Heart left ventricle (tissue), 16 donors: ENCODE measurements at regions of chr16 and their contacts with region 1.

Region 1: DNA sequence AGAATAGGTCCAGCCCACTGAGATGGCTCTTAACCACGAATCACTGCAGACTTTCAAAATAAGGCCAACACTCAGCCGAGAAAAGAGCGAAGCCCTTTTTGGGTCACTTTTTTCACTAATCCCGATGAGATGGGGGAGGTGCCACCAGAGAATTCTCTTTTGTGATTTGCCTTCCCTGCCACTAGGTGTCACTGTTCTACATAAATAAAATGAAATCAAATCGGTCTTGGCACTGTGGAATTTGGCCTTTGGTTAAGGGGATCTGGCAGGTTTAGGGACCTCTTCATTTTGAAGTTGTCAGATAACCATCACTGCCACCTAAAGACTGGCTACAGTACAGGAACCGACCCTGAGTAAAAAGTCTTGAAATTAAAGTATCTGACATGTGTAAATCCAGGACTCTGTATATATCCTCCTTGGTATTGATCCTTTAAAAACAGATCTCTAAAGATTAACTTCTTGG is 147.0 kb downstream of the HS3ST4 start:
- DNase-seq: peak in 1 of 5 donors; percentile 7
- ATAC-seq: peak in 2 of 4 donors; percentile 31 to 34
- H3K4me3 ChIP-seq: no peak overlapping the region
- H3K27ac ChIP-seq: no peak overlapping the region
- H3K4me1 ChIP-seq: peaks cover 0 to 4% (median 0%) of the 10 kb centered on the region in 12 donors
- H3K27me3 ChIP-seq: peaks cover 0 to 23% (median 0%) of the 10 kb centered on the region in 9 donors
- CTCF ChIP-seq: peak; percentile 65 to 82 (median 74)
- POLR2A ChIP-seq: no peak

Region 2: DNA sequence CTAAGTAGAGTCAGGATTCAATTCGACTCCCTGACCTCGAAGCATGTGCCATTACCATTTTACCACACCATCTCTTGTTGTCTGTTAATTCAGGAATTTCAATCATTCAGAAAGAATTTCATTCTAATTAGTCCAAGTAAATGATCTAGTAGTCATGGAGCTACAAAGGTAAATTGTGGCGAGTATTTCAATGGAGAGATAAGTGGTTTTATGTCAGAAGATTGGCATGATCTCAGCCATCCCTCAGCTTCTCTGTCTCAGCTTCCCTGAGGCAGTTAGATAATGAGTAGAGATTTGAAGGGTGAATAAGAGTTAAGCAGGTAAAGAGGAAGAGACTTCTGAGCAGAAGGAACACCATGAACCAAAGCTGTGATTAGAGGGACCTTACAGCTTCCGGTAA is 53.4 kb before region 1 on chr16:
- intact Hi-C with region 1: loop called in 1 of 10 experiments (anchors 10 kb)
- DNase-seq: no peak
- ATAC-seq: no peak
- H3K4me3 ChIP-seq: no peak overlapping the region
- H3K27ac ChIP-seq: no peak overlapping the region
- H3K4me1 ChIP-seq: no peaks in the 10 kb centered on the region
- H3K27me3 ChIP-seq: no peaks in the 10 kb centered on the region
- CTCF ChIP-seq: no peak
- POLR2A ChIP-seq: no peak

Region 3: GRCh38 chr16:26026709-26027450 is 188.1 kb after region 1 on chr16:
- intact Hi-C with region 1: no loop called
- DNase-seq: peak in 1 of 5 donors; percentile 8
- ATAC-seq: peak in 1 of 4 donors; percentile 52
- H3K4me3 ChIP-seq: no peak overlapping the region
- H3K27ac ChIP-seq: no peak overlapping the region
- H3K4me1 ChIP-seq: peaks cover 0 to 3% (median 0%) of the 10 kb centered on the region in 12 donors
- H3K27me3 ChIP-seq: peaks cover 0 to 7% (median 0%) of the 10 kb centered on the region in 9 donors
- CTCF ChIP-seq: no peak
- POLR2A ChIP-seq: no peak

Region 4: DNA sequence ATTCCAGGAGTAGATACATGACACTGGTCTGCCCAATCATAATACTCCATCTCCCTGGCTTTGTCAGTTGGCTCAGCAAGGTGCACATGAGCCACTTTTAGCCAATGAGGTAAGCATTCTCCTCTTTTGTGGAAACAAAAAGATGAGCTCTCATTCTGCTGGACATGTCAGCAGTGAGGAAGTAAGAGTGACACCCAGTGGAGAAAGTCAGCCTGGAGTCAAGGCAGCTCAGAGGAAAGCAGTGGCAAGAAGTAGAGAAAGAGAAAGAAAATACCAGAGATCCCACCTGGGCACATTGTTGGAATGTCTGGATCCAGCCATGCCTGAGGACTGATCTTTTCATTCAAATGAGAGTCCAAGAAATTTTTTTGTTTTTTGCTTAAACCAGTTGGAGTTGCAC is 731.0 kb after region 1 on chr16:
- intact Hi-C with region 1: loop called in 2 of 10 experiments (anchors 5 kb)
- DNase-seq: no peak
- ATAC-seq: no peak
- H3K4me3 ChIP-seq: no peak overlapping the region
- H3K27ac ChIP-seq: no peak overlapping the region
- H3K4me1 ChIP-seq: no peaks in the 10 kb centered on the region
- H3K27me3 ChIP-seq: no peaks in the 10 kb centered on the region
- CTCF ChIP-seq: peak in 10 of 12 donors; percentile 11 to 51 (median 24)
- POLR2A ChIP-seq: no peak

Region 5: DNA sequence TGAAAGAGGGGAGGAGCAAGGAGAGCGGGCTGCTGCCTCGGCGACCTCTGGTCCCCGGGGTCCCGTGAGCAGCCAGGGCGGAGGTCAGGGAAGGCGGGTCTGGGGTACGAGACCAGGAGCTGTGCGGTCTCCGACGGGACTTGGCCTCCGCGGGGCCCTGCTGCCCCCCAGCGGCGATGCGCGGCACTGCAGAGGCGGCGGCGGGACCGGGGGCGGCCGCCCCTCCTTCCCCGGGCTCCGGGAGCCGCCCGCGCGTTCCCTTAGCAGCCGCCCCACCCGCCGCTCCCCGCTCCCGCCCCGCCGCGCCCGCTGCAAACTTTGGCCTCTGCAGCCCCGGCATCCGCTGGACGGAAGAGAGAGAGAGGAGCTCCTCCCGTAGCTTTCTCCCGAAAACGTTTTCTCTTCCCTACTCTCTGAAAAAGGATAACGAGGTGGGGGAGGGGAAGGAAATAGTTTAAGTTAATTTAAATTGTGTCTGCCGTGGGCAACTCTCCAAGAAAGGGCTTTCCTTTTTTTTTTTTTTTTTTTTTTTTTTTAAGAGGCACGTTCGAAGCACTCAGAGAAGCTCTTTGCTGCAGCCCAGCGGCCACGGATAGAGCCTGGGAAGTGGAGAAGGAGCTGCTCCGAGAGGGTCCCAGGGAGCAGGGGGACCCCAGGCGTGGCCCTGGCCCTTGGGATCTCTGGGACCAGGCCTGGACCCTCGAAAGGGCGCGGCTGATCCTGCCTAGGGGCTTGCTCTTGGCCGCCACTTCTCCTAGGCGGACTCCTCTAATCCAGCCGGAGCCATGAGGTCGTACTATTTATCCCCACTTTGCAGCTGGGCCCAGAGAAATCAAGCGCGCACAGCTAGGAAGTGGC is 1271.1 kb after region 1 on chr16:
- intact Hi-C with region 1: loop called in 7 of 10 experiments (anchors 2 to 5 kb)
- DNase-seq: peak; percentile 83 to 91 (median 86)
- ATAC-seq: peak; percentile 78 to 95 (median 90)
- H3K4me3 ChIP-seq: peak overlapping the region in 10 of 12 donors; percentile 20 to 51 (median 38)
- H3K27ac ChIP-seq: peak overlapping the region in 11 of 12 donors; percentile 46 to 77 (median 59)
- H3K4me1 ChIP-seq: peaks cover 0 to 13% (median 7%) of the 10 kb centered on the region in 12 donors
- H3K27me3 ChIP-seq: peaks cover 0 to 16% (median 0%) of the 10 kb centered on the region in 9 donors
- CTCF ChIP-seq: peak; percentile 70 to 99 (median 92)
- POLR2A ChIP-seq: no peak

Region 6: GRCh38 chr16:27449434-27450195 is 1610.9 kb after region 1 on chr16:
- intact Hi-C with region 1: loop called in 3 of 10 experiments (anchors 10 kb)
- DNase-seq: peak in 1 of 5 donors; percentile 65
- ATAC-seq: peak in 1 of 4 donors; percentile 70
- H3K4me3 ChIP-seq: no peak overlapping the region
- H3K27ac ChIP-seq: peak overlapping the region in 1 of 12 donors; percentile 29
- H3K4me1 ChIP-seq: peaks cover 0 to 30% (median 0%) of the 10 kb centered on the region in 12 donors
- H3K27me3 ChIP-seq: peaks cover 0 to 41% (median 14%) of the 10 kb centered on the region in 9 donors
- CTCF ChIP-seq: no peak
- POLR2A ChIP-seq: no peak

Region 7: DNA sequence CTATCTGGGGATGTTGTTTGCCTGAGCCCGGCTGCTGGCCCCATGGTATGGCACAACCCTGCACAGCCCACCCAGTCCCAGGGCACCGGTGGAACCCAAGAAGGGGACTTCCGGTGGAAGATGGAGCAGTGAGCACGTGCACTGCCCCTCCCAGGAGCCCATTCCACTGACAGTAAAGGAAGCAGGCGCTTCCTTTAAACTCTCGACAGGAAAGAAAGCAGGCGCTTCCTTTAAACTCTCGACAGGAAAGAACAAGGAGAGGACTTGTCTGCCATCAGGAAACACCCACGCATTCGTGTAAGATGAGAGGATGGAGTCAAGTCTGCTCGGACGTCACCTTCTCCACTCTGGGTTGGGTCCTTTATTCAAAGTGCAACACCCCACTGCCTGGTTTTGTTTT is 1616.9 kb after region 1 on chr16:
- intact Hi-C with region 1: loop called in 5 of 10 experiments (anchors 5 to 10 kb)
- DNase-seq: peak in 2 of 5 donors; percentile 25 to 30
- ATAC-seq: peak in 3 of 4 donors; percentile 10 to 70 (median 29)
- H3K4me3 ChIP-seq: no peak overlapping the region
- H3K27ac ChIP-seq: peak overlapping the region in 2 of 12 donors; percentile 14 to 24
- H3K4me1 ChIP-seq: peaks cover 0 to 40% (median 11%) of the 10 kb centered on the region in 12 donors
- H3K27me3 ChIP-seq: peaks cover 0 to 10% (median 0%) of the 10 kb centered on the region in 9 donors
- CTCF ChIP-seq: no peak
- POLR2A ChIP-seq: no peak